ENCODE measurements at regions of chr20 and their contacts with region 1.

Region 1: GRCh38 chr20:63739130-63740069 is at the start of gene SLC2A4RG:
- DNase-seq: peak; percentile 81 to 92 (median 87)
- ATAC-seq: peak; percentile 50 to 73 (median 63)
- H3K4me3 ChIP-seq: peak within 1 kb of the TSS; percentile 51 to 95 (median 68)
- H3K27ac ChIP-seq: peak within 1 kb of the TSS; percentile 87 to 100 (median 96)
- H3K4me1 ChIP-seq: peaks cover 9 to 46% (median 35%) of the 10 kb centered on the region in 12 donors
- H3K27me3 ChIP-seq: no peaks in the 10 kb centered on the region
- CTCF ChIP-seq: no peak
- POLR2A ChIP-seq: no peak
- total RNA-seq, gene SLC2A4RG: 41.4 to 82.5 (median 70.7) TPM

Region 2: DNA sequence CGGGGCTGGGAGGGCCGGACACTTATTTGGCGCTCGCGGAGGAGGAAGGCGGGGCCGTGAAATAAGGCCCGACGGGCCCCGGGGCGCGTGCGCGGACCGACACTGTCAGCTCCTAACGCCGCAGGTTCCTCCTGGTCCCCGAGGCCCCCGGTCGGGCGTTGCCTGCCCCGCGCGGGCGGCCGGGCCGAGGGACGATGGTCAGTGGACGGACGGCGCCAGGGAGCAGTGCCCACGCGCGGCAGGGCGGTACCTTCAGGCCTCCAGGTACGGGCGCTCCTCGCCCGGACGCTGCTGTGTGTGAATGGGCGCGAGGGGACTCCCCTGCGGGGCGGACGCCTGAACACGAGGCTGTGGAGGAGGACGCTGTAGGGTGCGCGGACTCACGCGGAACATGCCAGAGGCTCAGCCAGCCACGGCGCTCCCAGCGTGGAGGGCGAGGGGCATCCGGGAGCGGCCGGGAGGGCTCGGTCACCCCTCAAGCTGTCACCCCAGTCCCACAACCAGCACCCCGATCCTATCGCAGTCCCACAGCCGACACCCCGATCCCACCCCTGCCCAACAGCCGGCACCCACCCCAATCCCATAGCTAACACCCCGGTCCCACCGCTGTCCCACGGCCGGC is 112.2 kb before region 1 on chr20:
- intact Hi-C with region 1: no loop called
- DNase-seq: peak; percentile 94 to 98 (median 96)
- ATAC-seq: peak; percentile 84 to 93 (median 92)
- H3K4me3 ChIP-seq: peak overlapping the region; percentile 58 to 99 (median 88)
- H3K27ac ChIP-seq: peak overlapping the region; percentile 88 to 99 (median 97)
- H3K4me1 ChIP-seq: peaks cover 0 to 33% (median 15%) of the 10 kb centered on the region in 12 donors
- H3K27me3 ChIP-seq: no peaks in the 10 kb centered on the region
- CTCF ChIP-seq: no peak
- POLR2A ChIP-seq: peak in 1 of 2 donors; percentile 81

Region 3: GRCh38 chr20:63657937-63658748 is 81.3 kb before region 1 on chr20 and contains the start of gene RTEL1:
- intact Hi-C with region 1: loop called in 1 of 10 experiments (anchors 5 kb)
- DNase-seq: peak; percentile 94 to 96 (median 95)
- ATAC-seq: peak; percentile 91 to 97 (median 96)
- H3K4me3 ChIP-seq: peak within 1 kb of the TSS; percentile 61 to 91 (median 78)
- H3K27ac ChIP-seq: peak within 1 kb of the TSS; percentile 65 to 98 (median 89)
- H3K4me1 ChIP-seq: peaks cover 3 to 33% (median 21%) of the 10 kb centered on the region in 12 donors
- H3K27me3 ChIP-seq: peaks cover 0 to under 1% (median 0%) of the 10 kb centered on the region in 9 donors
- CTCF ChIP-seq: peak in 1 of 12 donors; percentile 10
- POLR2A ChIP-seq: peak in 1 of 2 donors; percentile 35
- total RNA-seq, gene RTEL1: 3.0 to 17.8 (median 10.1) TPM

Region 4: GRCh38 chr20:63673951-63674350 is 65.4 kb before region 1 on chr20:
- intact Hi-C with region 1: loop called in 1 of 10 experiments (anchors 10 kb)
- DNase-seq: peak in 1 of 5 donors; percentile 51
- ATAC-seq: peak in 1 of 4 donors; percentile 32
- H3K4me3 ChIP-seq: no peak overlapping the region
- H3K27ac ChIP-seq: no peak overlapping the region
- H3K4me1 ChIP-seq: no peaks in the 10 kb centered on the region
- H3K27me3 ChIP-seq: no peaks in the 10 kb centered on the region
- CTCF ChIP-seq: no peak
- POLR2A ChIP-seq: no peak

Measured in heart left ventricle (tissue), 16 donors.